B cell (primary cell): ENCODE measurements at regions of chr9 and their contacts with region 1.

Region 1: GRCh38 chr9:114587385-114588202 is at the start of gene ATP6V1G1:
- DNase-seq: peak; percentile 99
- ATAC-seq: peak; percentile 93
- H3K4me3 ChIP-seq: peak within 1 kb of the TSS; percentile 80 to 99 (median 96)
- H3K4me3 Mint-ChIP-seq: peak within 1 kb of the TSS; percentile 98
- H3K27ac ChIP-seq: peak within 1 kb of the TSS; percentile 93
- H3K27ac Mint-ChIP-seq: peak within 1 kb of the TSS; percentile 98
- H3K4me1 ChIP-seq: peaks cover 39 to 50% of the 10 kb centered on the region in 2 donors
- H3K4me1 Mint-ChIP-seq: peaks cover 47% of the 10 kb centered on the region
- H3K27me3 ChIP-seq: no peaks in the 10 kb centered on the region
- H3K27me3 Mint-ChIP-seq: no peaks in the 10 kb centered on the region
- CTCF ChIP-seq: no peak
- total RNA-seq, gene ATP6V1G1: 83.1 and 86.8 TPM in 2 replicates

Region 2: GRCh38 chr9:114339130-114339908 is 248.3 kb before region 1 on chr9:
- CTCF ChIA-PET with region 1: interaction called, 4 read pairs
- POLR2A ChIA-PET with region 1: no interaction called
- intact Hi-C with region 1: loop called (anchors 1 kb)
- DNase-seq: peak; percentile 74
- ATAC-seq: peak; percentile 68
- H3K4me3 ChIP-seq: no peak overlapping the region
- H3K4me3 Mint-ChIP-seq: no peak overlapping the region
- H3K27ac ChIP-seq: peak overlapping the region in 1 of 2 donors; percentile 71
- H3K27ac Mint-ChIP-seq: peak overlapping the region; percentile 80
- H3K4me1 ChIP-seq: peaks cover 0 to 17% of the 10 kb centered on the region in 2 donors
- H3K4me1 Mint-ChIP-seq: peaks cover 37% of the 10 kb centered on the region
- H3K27me3 ChIP-seq: no peaks in the 10 kb centered on the region
- H3K27me3 Mint-ChIP-seq: no peaks in the 10 kb centered on the region
- CTCF ChIP-seq: peak; percentile 91

Region 3: GRCh38 chr9:114434878-114435311 is 152.7 kb before region 1 on chr9:
- CTCF ChIA-PET with region 1: interaction called, 30 read pairs
- POLR2A ChIA-PET with region 1: no interaction called
- intact Hi-C with region 1: no loop called
- DNase-seq: peak; percentile 70
- ATAC-seq: peak; percentile 76
- H3K4me3 ChIP-seq: no peak overlapping the region
- H3K4me3 Mint-ChIP-seq: no peak overlapping the region
- H3K27ac ChIP-seq: no peak overlapping the region
- H3K27ac Mint-ChIP-seq: no peak overlapping the region
- H3K4me1 ChIP-seq: no peaks in the 10 kb centered on the region
- H3K4me1 Mint-ChIP-seq: peaks cover 2% of the 10 kb centered on the region
- H3K27me3 ChIP-seq: peaks cover 0 to under 1% (median 0%) of the 10 kb centered on the region in 4 experiments
- H3K27me3 Mint-ChIP-seq: peaks cover 5% of the 10 kb centered on the region
- CTCF ChIP-seq: peak; percentile 72

Region 4: DNA sequence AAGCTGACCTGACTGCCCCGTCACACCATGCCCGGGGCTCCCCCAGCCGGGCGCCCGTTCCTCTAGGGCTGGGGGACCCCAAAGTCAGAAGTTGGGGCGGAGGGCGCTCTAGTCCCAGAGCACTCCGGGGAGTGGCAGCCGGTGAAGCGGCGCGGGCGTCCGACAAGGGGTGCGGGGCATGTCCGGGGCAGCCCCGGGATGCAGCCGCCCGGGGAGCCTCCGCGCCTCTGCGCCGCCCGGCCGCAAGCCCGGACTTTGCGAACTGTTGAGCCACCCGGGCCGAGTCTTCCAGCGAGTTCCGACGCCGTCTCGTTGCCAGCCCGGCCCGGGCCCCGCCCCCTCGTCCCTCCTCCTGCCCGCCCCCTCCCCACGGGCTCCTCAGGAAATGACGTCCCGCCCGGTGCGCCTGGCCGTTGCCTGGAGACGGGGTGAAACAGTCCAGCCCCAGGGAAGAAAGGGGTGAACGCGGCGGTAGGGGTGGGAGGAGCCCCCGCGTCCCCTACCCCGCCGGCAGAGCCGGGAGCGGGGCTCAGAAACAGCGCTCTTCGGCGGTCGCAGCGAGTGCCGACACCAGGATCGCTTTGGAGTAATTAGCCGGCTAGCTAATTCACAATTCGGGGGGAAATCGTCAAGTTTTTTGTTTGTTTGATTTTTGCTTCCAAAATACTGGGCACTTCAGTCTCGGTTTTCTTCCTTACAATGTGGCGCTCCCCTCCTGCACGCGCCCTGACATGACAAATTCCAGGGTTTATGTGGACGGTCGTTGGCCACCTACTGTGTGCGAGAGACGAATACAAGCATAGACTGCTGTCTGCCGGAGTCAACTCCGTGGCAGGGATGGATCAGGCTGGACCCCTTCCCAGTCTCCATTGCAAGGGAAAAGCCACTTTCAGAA is 82.2 kb before region 1 on chr9 and contains the start of gene WHRN:
- CTCF ChIA-PET with region 1: interaction called, 26 read pairs
- POLR2A ChIA-PET with region 1: interaction called, 4 read pairs
- intact Hi-C with region 1: loop called (anchors 1 kb)
- DNase-seq: peak; percentile 95
- ATAC-seq: peak; percentile 85
- H3K4me3 ChIP-seq: peak within 1 kb of the TSS; percentile 53 to 77 (median 65)
- H3K4me3 Mint-ChIP-seq: peak within 1 kb of the TSS; percentile 90
- H3K27ac ChIP-seq: peak within 1 kb of the TSS in 1 of 2 donors; percentile 62
- H3K27ac Mint-ChIP-seq: peak within 1 kb of the TSS; percentile 90
- H3K4me1 ChIP-seq: peaks cover 29 to 41% of the 10 kb centered on the region in 2 donors
- H3K4me1 Mint-ChIP-seq: peaks cover 43% of the 10 kb centered on the region
- H3K27me3 ChIP-seq: peaks cover 0 to 17% (median 9%) of the 10 kb centered on the region in 4 experiments
- H3K27me3 Mint-ChIP-seq: peaks cover 29% of the 10 kb centered on the region
- CTCF ChIP-seq: no peak
- total RNA-seq, gene WHRN: 95.7 and 96.6 TPM in 2 replicates

Region 5: GRCh38 chr9:114571391-114571790 is 16.2 kb before region 1 on chr9:
- CTCF ChIA-PET with region 1: interaction called, 8 read pairs
- POLR2A ChIA-PET with region 1: interaction called, 15 read pairs
- intact Hi-C with region 1: loop called (anchors 1 kb)
- DNase-seq: no peak
- ATAC-seq: no peak
- H3K4me3 ChIP-seq: no peak overlapping the region
- H3K4me3 Mint-ChIP-seq: no peak overlapping the region
- H3K27ac ChIP-seq: no peak overlapping the region
- H3K27ac Mint-ChIP-seq: no peak overlapping the region
- H3K4me1 ChIP-seq: peaks cover 28 to 34% of the 10 kb centered on the region in 2 donors
- H3K4me1 Mint-ChIP-seq: peaks cover 25% of the 10 kb centered on the region
- H3K27me3 ChIP-seq: no peaks in the 10 kb centered on the region
- H3K27me3 Mint-ChIP-seq: no peaks in the 10 kb centered on the region
- CTCF ChIP-seq: no peak

Region 6: GRCh38 chr9:114611516-114612271 is 24.1 kb after region 1 on chr9:
- CTCF ChIA-PET with region 1: interaction called, 76 read pairs
- POLR2A ChIA-PET with region 1: interaction called, 17 read pairs
- intact Hi-C with region 1: loop called (anchors 1 kb)
- DNase-seq: no peak
- ATAC-seq: peak; percentile 61
- H3K4me3 ChIP-seq: peak overlapping the region; percentile 86 to 98 (median 88)
- H3K4me3 Mint-ChIP-seq: peak overlapping the region; percentile 95
- H3K27ac ChIP-seq: peak overlapping the region; percentile 82 to 89
- H3K27ac Mint-ChIP-seq: peak overlapping the region; percentile 84
- H3K4me1 ChIP-seq: peaks cover 65 to 73% of the 10 kb centered on the region in 2 donors
- H3K4me1 Mint-ChIP-seq: peaks cover 69% of the 10 kb centered on the region
- H3K27me3 ChIP-seq: no peaks in the 10 kb centered on the region
- H3K27me3 Mint-ChIP-seq: no peaks in the 10 kb centered on the region
- CTCF ChIP-seq: no peak